IMR-90 (cell line): ENCODE measurements at regions of chr10 and their contacts with region 1.

Region 1: GRCh38 chr10:113385021-113385999 is 167.5 kb upstream of the HABP2 start:
- DNase-seq: peak; percentile 85
- ATAC-seq: peak; percentile 98
- H3K4me3 ChIP-seq: no peak overlapping the region
- H3K27ac ChIP-seq: no peak overlapping the region
- H3K4me1 ChIP-seq: peaks cover 3% of the 10 kb centered on the region; the same call in 1 of the 2 replicates
- H3K27me3 ChIP-seq: peaks cover 12% of the 10 kb centered on the region
- CTCF ChIP-seq: peak; percentile 96
- POLR2A ChIP-seq: peak; percentile 60; the same call in 1 of the 2 replicates
- RAD21 ChIP-seq: peak; percentile 99

Region 2: DNA sequence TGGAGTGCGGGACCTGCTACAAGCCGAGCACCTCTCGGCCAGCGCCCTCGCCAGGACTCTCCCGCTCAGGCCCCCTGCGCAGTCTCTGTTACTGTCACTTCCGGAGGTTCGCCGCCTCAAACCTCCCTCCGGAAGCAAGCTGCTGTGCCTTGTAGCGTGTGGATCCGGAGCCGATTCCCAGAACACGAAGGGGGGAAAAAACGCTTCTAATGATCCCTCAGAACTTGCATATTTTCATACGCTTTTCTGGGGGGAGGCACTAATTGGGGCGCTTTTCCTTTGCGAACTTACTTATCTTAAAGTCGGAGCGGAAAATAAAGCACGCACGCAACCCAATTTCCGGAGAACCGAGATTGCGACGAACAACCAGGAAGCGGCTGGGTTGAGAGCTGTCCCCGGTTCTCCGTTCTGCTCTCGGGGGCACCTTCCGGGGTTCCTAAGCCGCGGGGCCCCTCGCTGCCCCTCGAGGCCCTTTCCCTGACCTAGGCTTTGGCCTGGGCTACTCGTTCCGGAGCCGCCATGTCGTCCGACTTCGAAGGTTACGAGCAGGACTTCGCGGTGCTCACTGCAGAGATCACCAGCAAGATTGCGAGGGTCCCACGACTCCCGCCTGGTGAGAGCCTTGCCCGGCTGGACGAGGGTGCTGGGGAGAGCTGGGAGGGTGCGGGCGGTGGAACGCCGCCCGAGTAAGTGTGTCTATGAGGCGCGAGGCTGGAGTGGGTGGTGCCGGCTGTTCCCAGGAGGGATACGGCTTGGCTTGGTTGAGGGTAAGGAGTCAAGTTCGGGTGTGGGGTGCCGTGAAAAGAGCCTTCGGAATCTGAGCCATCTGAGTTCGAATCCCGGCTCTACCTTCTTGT is 938.2 kb before region 1 on chr10 and contains the starts of genes VTI1A and ZDHHC6:
- CTCF ChIA-PET with region 1: no interaction called
- POLR2A ChIA-PET with region 1: no interaction called
- dilution Hi-C with region 1: no loop called
- in situ Hi-C with region 1: no loop called
- intact Hi-C with region 1: loop called (anchors 1 kb)
- DNase-seq: peak; percentile 84
- ATAC-seq: peak; percentile 96
- H3K4me3 ChIP-seq: peak within 1 kb of the TSS; percentile 95
- H3K27ac ChIP-seq: peak within 1 kb of the TSS; percentile 92
- H3K4me1 ChIP-seq: no peaks in the 10 kb centered on the region
- H3K27me3 ChIP-seq: no peaks in the 10 kb centered on the region
- CTCF ChIP-seq: peak; percentile 24; the same call in 1 of the 2 replicates
- POLR2A ChIP-seq: peak; percentile 67; the same call in 1 of the 2 replicates
- RAD21 ChIP-seq: 0 out of 2 replicates have a peak, but pooled peaks have one; percentile 10
- total RNA-seq, gene VTI1A: 24.9 and 35.0 TPM in 2 replicates
- total RNA-seq, gene ZDHHC6: 17.4 and 22.2 TPM in 2 replicates

Region 3: DNA sequence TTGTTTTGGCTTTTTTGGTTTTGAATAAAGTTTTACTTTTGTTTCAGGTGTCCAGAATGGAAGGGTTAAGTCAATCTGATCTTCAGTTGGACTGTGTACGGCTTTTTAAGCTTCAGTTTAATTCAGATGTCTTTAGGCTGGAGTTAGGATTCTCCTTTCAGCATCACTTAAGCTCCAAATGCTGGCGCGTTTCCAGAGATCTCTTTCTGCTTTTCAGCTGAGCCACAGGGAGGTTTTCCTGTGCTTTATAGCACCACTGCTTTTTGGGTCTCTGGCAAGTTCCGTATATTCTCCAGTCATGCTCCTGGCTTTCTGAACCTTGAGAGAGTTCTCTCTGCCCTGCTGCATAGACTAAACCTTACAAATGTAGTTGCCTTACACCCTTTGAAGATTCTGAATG is 878.3 kb before region 1 on chr10:
- CTCF ChIA-PET with region 1: no interaction called
- POLR2A ChIA-PET with region 1: no interaction called
- dilution Hi-C with region 1: no loop called
- in situ Hi-C with region 1: no loop called
- intact Hi-C with region 1: no loop called
- DNase-seq: no peak
- ATAC-seq: no peak
- H3K4me3 ChIP-seq: no peak overlapping the region
- H3K27ac ChIP-seq: no peak overlapping the region
- H3K4me1 ChIP-seq: no peaks in the 10 kb centered on the region
- H3K27me3 ChIP-seq: no peaks in the 10 kb centered on the region
- CTCF ChIP-seq: no peak
- POLR2A ChIP-seq: no peak
- RAD21 ChIP-seq: no peak

Region 4: GRCh38 chr10:112721080-112721698 is 664.1 kb before region 1 on chr10:
- CTCF ChIA-PET with region 1: interaction called, 3 read pairs
- POLR2A ChIA-PET with region 1: no interaction called
- dilution Hi-C with region 1: no loop called
- in situ Hi-C with region 1: loop called (anchors 25 kb)
- intact Hi-C with region 1: loop called (anchors 2 kb)
- DNase-seq: peak; percentile 53
- ATAC-seq: peak; percentile 65; the same call in 1 of the 2 replicates
- H3K4me3 ChIP-seq: no peak overlapping the region
- H3K27ac ChIP-seq: no peak overlapping the region
- H3K4me1 ChIP-seq: peaks cover 6% of the 10 kb centered on the region
- H3K27me3 ChIP-seq: no peaks in the 10 kb centered on the region
- CTCF ChIP-seq: peak; percentile 55
- POLR2A ChIP-seq: no peak
- RAD21 ChIP-seq: peak; percentile 59

Region 5: DNA sequence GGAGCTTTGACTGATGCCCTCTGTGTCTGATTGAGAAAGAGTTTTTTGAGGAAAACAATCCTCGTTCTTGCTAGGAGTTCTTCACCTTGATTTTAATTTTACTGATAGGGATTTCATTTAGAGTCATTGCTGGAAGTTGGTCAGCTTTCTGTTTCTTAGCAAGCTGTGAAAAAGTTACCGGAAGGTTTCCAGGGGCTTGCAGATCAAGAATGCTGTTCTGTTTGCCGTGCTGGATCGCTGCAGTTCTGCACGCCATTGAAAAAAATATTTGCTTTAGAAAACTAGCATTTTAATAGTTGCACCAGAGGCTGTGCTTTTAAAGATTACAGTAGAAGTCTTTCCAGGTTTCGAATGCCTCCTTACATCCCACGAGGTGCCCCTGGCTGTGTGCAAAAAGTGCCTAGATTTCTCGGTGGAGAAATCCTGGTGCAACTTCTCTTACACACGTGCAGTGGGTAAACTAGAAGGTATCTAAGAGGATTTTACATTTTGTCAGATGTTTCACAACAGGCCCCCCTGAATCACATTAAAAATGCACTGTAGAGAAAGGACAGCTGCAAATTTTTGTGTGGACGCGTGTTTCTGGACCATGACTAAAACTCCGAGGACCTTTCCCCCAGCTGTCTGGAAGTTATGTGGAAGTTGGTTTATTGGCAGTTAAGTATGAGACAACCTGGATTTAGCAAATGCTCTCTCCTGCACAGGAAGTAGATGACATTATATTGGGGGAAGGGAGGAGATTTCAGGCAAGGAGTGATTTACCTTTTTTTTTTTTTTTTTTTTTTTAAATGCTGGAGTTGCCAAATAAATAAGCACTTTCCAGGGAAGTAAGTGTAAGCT is 429.5 kb before region 1 on chr10:
- CTCF ChIA-PET with region 1: no interaction called
- POLR2A ChIA-PET with region 1: no interaction called
- dilution Hi-C with region 1: no loop called
- in situ Hi-C with region 1: no loop called
- intact Hi-C with region 1: loop called (anchors 1 kb)
- DNase-seq: peak; percentile 88
- ATAC-seq: 0 out of 2 replicates have a peak, but pooled peaks have one; percentile 2
- H3K4me3 ChIP-seq: peak overlapping the region; percentile 33
- H3K27ac ChIP-seq: peak overlapping the region; percentile 68
- H3K4me1 ChIP-seq: peaks cover 25% of the 10 kb centered on the region
- H3K27me3 ChIP-seq: no peaks in the 10 kb centered on the region
- CTCF ChIP-seq: no peak
- POLR2A ChIP-seq: no peak
- RAD21 ChIP-seq: no peak

Region 6: GRCh38 chr10:113126229-113127201 is 258.8 kb before region 1 on chr10:
- CTCF ChIA-PET with region 1: interaction called, 5 read pairs
- POLR2A ChIA-PET with region 1: no interaction called
- dilution Hi-C with region 1: no loop called
- in situ Hi-C with region 1: loop called (anchors 10 kb)
- intact Hi-C with region 1: loop called (anchors 2 kb)
- DNase-seq: peak; percentile 76
- ATAC-seq: peak; percentile 99
- H3K4me3 ChIP-seq: peak overlapping the region; percentile 24; the same call in 1 of the 2 replicates
- H3K27ac ChIP-seq: no peak overlapping the region
- H3K4me1 ChIP-seq: peaks cover 2% of the 10 kb centered on the region; the same call in 1 of the 2 replicates
- H3K27me3 ChIP-seq: no peaks in the 10 kb centered on the region
- CTCF ChIP-seq: peak; percentile 95
- POLR2A ChIP-seq: 0 out of 2 replicates have a peak, but pooled peaks have one; percentile 32
- RAD21 ChIP-seq: peak; percentile 96

Region 7: GRCh38 chr10:113290137-113290536 is 95.2 kb before region 1 on chr10:
- CTCF ChIA-PET with region 1: no interaction called
- POLR2A ChIA-PET with region 1: no interaction called
- dilution Hi-C with region 1: no loop called
- in situ Hi-C with region 1: no loop called
- intact Hi-C with region 1: no loop called
- DNase-seq: no peak
- ATAC-seq: no peak
- H3K4me3 ChIP-seq: no peak overlapping the region
- H3K27ac ChIP-seq: no peak overlapping the region
- H3K4me1 ChIP-seq: no peaks in the 10 kb centered on the region
- H3K27me3 ChIP-seq: no peaks in the 10 kb centered on the region; the same call in 1 of the 2 replicates
- CTCF ChIP-seq: no peak
- POLR2A ChIP-seq: no peak
- RAD21 ChIP-seq: no peak

Region 8: DNA sequence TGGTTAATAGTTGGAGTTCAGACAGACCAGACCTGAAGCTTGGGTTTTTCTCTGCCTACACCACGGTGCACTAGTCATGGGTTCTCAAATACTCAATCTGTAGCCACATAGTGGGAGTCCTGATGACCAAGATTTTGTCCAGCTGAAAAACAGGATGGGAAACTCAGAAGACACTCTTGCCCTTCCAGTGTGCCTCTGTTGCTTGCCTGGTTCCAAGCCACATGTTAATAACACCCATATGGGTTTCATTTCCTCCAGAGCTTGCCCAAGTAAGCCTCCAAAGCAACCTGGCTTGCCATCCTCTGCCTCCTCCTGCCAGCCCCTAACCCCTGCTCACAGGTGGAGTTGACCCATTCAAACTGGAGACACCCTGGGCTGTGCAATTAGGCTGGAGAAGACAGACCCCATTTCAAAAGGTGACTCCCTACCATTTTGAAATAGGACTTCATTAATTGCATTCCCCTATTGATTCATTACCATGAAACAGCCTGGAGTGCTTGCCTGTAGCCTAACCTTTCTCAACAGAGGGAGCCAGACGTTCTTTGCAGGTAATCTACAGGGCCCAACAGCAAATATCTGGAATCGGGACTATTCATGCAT is 59.6 kb after region 1 on chr10:
- CTCF ChIA-PET with region 1: no interaction called
- POLR2A ChIA-PET with region 1: no interaction called
- dilution Hi-C with region 1: no loop called
- in situ Hi-C with region 1: no loop called
- intact Hi-C with region 1: no loop called
- DNase-seq: no peak
- ATAC-seq: no peak
- H3K4me3 ChIP-seq: no peak overlapping the region
- H3K27ac ChIP-seq: no peak overlapping the region
- H3K4me1 ChIP-seq: no peaks in the 10 kb centered on the region
- H3K27me3 ChIP-seq: no peaks in the 10 kb centered on the region
- CTCF ChIP-seq: no peak
- POLR2A ChIP-seq: no peak
- RAD21 ChIP-seq: no peak